WTC11 (cell line): ENCODE measurements at regions of chr4 and their contacts with region 1.

Region 1: GRCh38 chr4:1767770-1768366 is 25.2 kb upstream of the FGFR3 start:
- DNase-seq: peak; percentile 81
- ATAC-seq: peak; percentile 60
- H3K4me3 Mint-ChIP-seq: peak overlapping the region; percentile 59
- H3K27ac Mint-ChIP-seq: no peak overlapping the region
- H3K4me1 Mint-ChIP-seq: peaks cover 13% of the 10 kb centered on the region
- H3K27me3 Mint-ChIP-seq: peaks cover 4% of the 10 kb centered on the region
- CTCF ChIP-seq: no peak

Region 2: DNA sequence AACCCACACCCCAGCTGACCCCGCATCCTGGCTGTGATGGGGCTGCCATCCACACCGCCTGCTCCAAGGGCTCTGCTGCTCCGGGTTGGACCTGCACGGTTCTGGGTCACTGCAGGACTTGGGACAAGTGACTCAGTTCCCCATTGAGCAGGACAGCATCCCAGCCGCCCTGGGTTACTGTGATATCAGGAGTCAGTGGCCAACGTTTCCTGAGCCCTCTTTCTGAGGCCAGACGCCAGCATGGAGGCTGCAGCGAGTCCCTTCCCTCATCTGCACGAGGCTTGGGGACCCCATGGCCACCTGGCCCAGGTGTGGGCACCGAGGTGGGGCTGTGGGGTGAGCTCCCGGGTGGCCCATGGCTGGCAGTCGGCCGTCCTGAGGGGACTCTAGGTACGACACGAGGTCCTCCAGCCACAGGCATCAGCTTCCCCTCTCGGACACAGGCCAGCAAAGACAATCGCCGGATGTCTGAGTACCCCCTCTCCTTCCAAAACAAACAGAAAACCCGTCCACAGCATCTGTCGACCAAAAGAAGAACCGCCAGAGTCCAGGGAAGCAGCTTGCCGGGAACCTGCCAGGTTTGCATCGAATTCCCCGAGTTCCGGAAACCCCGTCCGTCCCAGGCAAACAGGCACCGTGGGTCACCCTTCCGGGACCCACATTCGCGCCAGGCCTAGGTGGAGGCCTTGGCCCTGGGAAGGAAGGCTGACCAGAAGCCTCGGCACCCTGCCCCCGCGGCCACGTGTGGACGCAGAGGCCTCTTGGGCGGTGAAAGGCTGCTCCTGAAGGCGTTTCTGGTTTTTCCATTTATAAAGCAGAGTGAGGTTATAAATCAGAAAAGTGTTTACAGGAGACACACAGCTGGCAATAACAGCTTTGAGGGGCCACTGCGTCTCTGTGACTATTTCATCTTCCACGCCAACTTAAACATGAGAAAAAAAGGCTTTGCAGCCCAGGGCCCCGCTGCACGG is 219.7 kb before region 1 on chr4:
- CTCF ChIA-PET with region 1: no interaction called
- POLR2A ChIA-PET with region 1: no interaction called
- DNase-seq: no peak
- ATAC-seq: no peak
- H3K4me3 Mint-ChIP-seq: no peak overlapping the region
- H3K27ac Mint-ChIP-seq: peak overlapping the region; percentile 81; the same call in 1 of the 2 replicates
- H3K4me1 Mint-ChIP-seq: peaks cover 5% of the 10 kb centered on the region
- H3K27me3 Mint-ChIP-seq: peaks cover 3% of the 10 kb centered on the region; the same call in 1 of the 2 replicates
- CTCF ChIP-seq: no peak

Region 3: DNA sequence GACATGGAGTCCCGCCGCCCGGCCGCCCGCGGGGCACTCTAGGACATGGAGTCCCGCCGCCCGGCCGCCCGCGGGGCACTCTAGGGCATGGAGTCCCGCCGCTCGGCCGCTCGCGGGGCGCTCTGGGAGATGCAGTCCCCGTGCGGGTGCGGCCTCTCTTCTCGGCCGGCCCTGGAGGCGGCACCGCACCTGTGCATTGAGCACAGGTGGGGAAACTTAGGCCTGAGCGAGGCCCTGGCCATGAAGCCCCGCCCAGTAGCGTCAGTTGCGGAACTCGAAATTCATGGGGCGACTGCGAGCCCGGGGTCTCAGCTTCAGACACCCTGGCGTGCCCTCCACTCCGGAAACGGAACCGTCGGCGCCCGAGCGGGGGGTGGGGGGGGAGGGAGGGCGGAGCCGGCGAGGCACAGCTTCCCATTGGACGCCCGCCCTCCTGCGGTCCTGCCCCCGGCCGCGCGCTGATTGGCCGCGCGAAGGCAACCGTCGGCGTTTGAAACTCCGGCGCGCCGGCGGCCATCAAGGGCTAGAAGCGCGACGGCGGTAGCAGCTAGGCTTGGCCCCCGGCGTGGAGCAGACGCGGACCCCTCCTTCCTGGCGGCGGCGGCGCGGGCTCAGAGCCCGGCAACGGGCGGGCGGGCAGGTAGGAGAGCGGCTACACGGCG is 46.7 kb before region 1 on chr4 and contains the starts of genes TACC3 and TMEM129:
- CTCF ChIA-PET with region 1: interaction called, 11 read pairs
- POLR2A ChIA-PET with region 1: no interaction called
- DNase-seq: peak; percentile 97
- ATAC-seq: peak; percentile 90
- H3K4me3 Mint-ChIP-seq: peak within 1 kb of the TSS; percentile 96
- H3K27ac Mint-ChIP-seq: peak within 1 kb of the TSS; percentile 96
- H3K4me1 Mint-ChIP-seq: peaks cover 23% of the 10 kb centered on the region
- H3K27me3 Mint-ChIP-seq: no peaks in the 10 kb centered on the region
- CTCF ChIP-seq: no peak
- total RNA-seq, gene TACC3: 161 to 207 TPM (median 165 TPM) in 3 replicates
- total RNA-seq, gene TMEM129: 44.2 to 54.9 TPM (median 48.7 TPM) in 3 replicates

Region 4: GRCh38 chr4:1752284-1753041 is 15.4 kb before region 1 on chr4:
- CTCF ChIA-PET with region 1: interaction called, 62 read pairs
- POLR2A ChIA-PET with region 1: interaction called, 3 read pairs
- DNase-seq: no peak
- ATAC-seq: peak; percentile 25
- H3K4me3 Mint-ChIP-seq: no peak overlapping the region
- H3K27ac Mint-ChIP-seq: no peak overlapping the region
- H3K4me1 Mint-ChIP-seq: no peaks in the 10 kb centered on the region
- H3K27me3 Mint-ChIP-seq: peaks cover 2% of the 10 kb centered on the region; the same call in 1 of the 2 replicates
- CTCF ChIP-seq: no peak

Region 5: DNA sequence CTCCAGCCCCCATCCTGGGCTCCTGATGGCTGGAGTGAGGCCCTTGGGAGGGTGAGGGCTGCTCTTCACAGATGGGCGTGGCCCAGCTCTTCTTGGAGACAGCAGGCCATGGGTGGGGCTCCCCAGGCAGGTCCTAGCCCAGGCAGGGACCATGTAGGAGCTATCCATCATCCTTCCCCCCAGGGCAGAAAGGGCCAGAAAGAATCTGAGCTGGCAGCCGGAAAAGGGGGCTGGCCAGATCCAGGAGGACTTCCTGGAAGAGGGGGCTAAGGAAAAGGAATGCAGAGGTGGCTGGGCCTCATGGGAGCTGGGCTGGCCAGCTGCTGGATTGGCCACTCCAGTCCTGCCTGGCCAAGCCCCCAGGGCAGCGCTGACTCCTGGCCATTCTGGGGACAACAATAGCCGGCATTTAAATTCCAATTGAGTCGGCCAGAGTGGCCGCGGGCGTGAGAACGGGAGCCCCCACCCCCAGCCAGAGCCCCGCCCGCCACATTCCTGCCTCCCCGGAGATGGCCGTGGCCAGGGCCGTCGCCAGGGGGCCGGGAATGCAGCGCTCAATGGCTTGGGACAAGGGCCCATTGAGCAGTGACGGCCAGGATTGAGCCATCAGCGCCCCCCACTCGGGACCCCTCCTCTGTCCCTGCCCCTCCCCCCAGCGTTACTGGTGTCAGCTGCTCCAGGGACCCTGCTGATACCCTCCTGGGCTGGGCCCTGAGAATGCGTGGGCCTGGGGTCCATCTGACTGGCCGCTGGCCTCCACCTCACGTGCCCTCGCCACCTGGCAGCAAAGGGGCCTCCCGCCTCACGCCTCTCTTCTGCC is 10.2 kb after region 1 on chr4:
- CTCF ChIA-PET with region 1: interaction called, 88 read pairs
- POLR2A ChIA-PET with region 1: interaction called, 13 read pairs
- DNase-seq: peak; percentile 91
- ATAC-seq: peak; percentile 72
- H3K4me3 Mint-ChIP-seq: no peak overlapping the region
- H3K27ac Mint-ChIP-seq: no peak overlapping the region
- H3K4me1 Mint-ChIP-seq: peaks cover 15% of the 10 kb centered on the region; the same call in 1 of the 2 replicates
- H3K27me3 Mint-ChIP-seq: no peaks in the 10 kb centered on the region
- CTCF ChIP-seq: no peak

Region 6: GRCh38 chr4:1784789-1785591 is 17.1 kb after region 1 on chr4:
- CTCF ChIA-PET with region 1: interaction called, 88 read pairs
- POLR2A ChIA-PET with region 1: no interaction called
- DNase-seq: no peak
- ATAC-seq: no peak
- H3K4me3 Mint-ChIP-seq: no peak overlapping the region
- H3K27ac Mint-ChIP-seq: no peak overlapping the region
- H3K4me1 Mint-ChIP-seq: peaks cover 3% of the 10 kb centered on the region; the same call in 1 of the 2 replicates
- H3K27me3 Mint-ChIP-seq: peaks cover under 1% of the 10 kb centered on the region; the same call in 1 of the 2 replicates
- CTCF ChIP-seq: no peak

Region 7: GRCh38 chr4:1792832-1793495 is 25.1 kb after region 1 on chr4 and contains the start of gene FGFR3:
- CTCF ChIA-PET with region 1: interaction called, 40 read pairs
- POLR2A ChIA-PET with region 1: interaction called, 5 read pairs
- DNase-seq: peak; percentile 78
- ATAC-seq: peak; percentile 71
- H3K4me3 Mint-ChIP-seq: peak within 1 kb of the TSS; percentile 54
- H3K27ac Mint-ChIP-seq: no peak within 1 kb of the TSS
- H3K4me1 Mint-ChIP-seq: no peaks in the 10 kb centered on the region
- H3K27me3 Mint-ChIP-seq: peaks cover 51% of the 10 kb centered on the region
- CTCF ChIP-seq: no peak
- total RNA-seq, gene FGFR3: 18.2 to 19.9 TPM (median 19.7 TPM) in 3 replicates

Region 8: DNA sequence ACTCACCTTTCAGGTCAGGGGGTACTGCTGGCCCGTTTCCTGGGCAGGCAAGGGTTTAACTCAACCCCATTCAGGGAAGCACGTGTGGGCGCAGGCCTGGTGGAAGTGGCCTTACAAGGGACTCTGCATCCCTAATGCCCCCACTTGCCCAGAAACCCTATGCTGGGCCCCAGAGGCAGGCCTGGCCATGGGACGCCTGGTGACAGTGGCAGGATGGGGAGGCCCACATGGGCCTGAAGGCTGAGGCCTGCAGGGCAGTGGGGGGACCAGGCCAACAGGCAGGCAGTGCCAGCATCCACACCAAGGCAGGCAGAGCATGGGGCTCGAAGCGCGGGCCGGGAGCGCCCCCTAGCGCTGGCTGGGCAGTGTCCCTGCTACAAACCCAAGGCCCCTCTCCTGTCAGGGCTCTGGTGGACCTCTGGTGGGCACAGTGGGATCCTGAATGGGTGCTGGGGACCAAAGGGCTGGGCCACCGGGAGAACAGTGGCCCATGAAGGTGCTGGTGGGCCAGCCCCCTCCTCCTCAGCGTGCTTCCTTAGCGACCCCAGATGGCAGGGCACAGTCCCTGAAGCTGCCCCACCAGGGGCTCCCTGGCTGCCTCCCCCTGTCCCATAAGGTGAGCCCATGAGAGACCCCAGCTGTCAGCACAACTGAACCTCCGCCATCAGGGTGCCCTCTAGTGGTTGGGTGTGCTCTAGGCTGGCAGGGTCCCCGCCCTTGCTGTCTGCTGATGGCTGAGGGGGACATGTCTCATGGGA is 42.1 kb after region 1 on chr4:
- CTCF ChIA-PET with region 1: interaction called, 45 read pairs
- POLR2A ChIA-PET with region 1: no interaction called
- DNase-seq: peak; percentile 90
- ATAC-seq: peak; percentile 91
- H3K4me3 Mint-ChIP-seq: no peak overlapping the region
- H3K27ac Mint-ChIP-seq: no peak overlapping the region
- H3K4me1 Mint-ChIP-seq: no peaks in the 10 kb centered on the region
- H3K27me3 Mint-ChIP-seq: no peaks in the 10 kb centered on the region
- CTCF ChIP-seq: peak; percentile 92

Region 9: GRCh38 chr4:1883583-1883982 is 115.7 kb after region 1 on chr4:
- CTCF ChIA-PET with region 1: no interaction called
- POLR2A ChIA-PET with region 1: no interaction called
- DNase-seq: no peak
- ATAC-seq: no peak
- H3K4me3 Mint-ChIP-seq: no peak overlapping the region
- H3K27ac Mint-ChIP-seq: peak overlapping the region; percentile 66
- H3K4me1 Mint-ChIP-seq: peaks cover 9% of the 10 kb centered on the region
- H3K27me3 Mint-ChIP-seq: no peaks in the 10 kb centered on the region
- CTCF ChIP-seq: no peak

Region 10: GRCh38 chr4:1927675-1928074 is 159.8 kb after region 1 on chr4:
- CTCF ChIA-PET with region 1: no interaction called
- POLR2A ChIA-PET with region 1: no interaction called
- DNase-seq: no peak
- ATAC-seq: no peak
- H3K4me3 Mint-ChIP-seq: no peak overlapping the region
- H3K27ac Mint-ChIP-seq: no peak overlapping the region
- H3K4me1 Mint-ChIP-seq: no peaks in the 10 kb centered on the region
- H3K27me3 Mint-ChIP-seq: no peaks in the 10 kb centered on the region
- CTCF ChIP-seq: no peak